Heart right ventricle (tissue), 16 donors: ENCODE measurements at regions of chr1 and their contacts with region 1.

Region 1: GRCh38 chr1:86499987-86500593 is 31.4 kb downstream of the CLCA1 start:
- DNase-seq: no peak
- ATAC-seq: no peak
- H3K4me3 ChIP-seq: no peak overlapping the region
- H3K27ac ChIP-seq: peak overlapping the region in 5 of 10 donors; percentile 37 to 94 (median 93)
- H3K4me1 ChIP-seq: peaks cover 0 to 52% (median 25%) of the 10 kb centered on the region in 9 donors
- H3K27me3 ChIP-seq: no peaks in the 10 kb centered on the region
- CTCF ChIP-seq: peak; percentile 66 to 98 (median 87)

Region 2: DNA sequence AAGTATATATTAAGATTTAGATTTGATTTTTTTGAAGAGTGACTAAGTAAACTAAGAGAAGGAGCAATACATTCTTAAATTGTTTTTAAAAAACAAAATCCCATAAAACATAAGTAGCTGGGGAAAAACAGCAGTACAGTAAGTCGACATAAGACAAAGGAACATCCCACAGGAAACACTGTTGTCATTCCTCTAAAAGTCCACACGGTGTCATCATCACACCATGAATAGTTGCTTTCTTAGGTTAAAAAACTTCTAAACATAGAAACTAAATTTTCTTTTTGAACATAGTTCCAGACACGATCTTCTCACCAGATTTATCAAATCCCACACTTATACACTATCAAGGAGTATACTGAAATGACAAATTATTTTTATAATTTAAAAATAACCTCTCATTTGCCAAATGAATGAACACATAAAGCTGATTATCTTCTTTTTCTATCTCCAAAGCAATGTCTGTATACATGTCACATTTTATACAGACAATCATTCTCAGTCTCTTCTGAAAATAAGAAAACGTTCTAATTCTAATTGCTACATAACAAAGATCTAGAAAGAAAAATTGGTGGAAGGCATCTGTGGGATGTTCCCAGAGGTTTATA is 119.7 kb before region 1 on chr1:
- intact Hi-C with region 1: loop called in 8 of 10 experiments (anchors 2 to 10 kb)
- DNase-seq: no peak
- ATAC-seq: peak in 5 of 8 donors; percentile 58 to 77 (median 65)
- H3K4me3 ChIP-seq: peak overlapping the region in 4 of 10 donors; percentile 10 to 43 (median 22)
- H3K27ac ChIP-seq: peak overlapping the region in 1 of 10 donors; percentile 31
- H3K4me1 ChIP-seq: peaks cover 0 to 23% (median 0%) of the 10 kb centered on the region in 9 donors
- H3K27me3 ChIP-seq: no peaks in the 10 kb centered on the region
- CTCF ChIP-seq: peak; percentile 39 to 94 (median 82)

Region 3: DNA sequence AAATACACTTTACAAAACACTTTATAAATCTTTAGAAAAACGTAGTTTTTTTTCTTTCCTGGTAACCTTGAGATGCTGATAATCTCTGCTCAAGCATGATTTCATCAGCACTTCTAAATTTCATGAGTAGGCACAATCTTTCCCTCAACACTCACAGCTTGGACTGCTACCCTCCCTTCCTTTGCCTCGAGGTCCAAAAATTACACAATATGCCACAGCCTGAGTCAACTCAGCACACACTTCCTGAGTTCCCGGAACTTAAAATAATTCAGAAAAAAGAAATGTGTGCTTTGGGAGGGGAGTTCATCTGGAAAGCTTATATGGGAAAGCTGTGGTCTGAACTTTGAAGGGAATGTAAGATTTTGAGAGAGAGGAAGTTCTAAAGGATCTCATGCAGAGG is 70.3 kb before region 1 on chr1:
- intact Hi-C with region 1: loop called in 1 of 10 experiments (anchors 10 kb)
- DNase-seq: peak in 1 of 2 donors; percentile 55
- ATAC-seq: peak; percentile 91 to 99 (median 97)
- H3K4me3 ChIP-seq: no peak overlapping the region
- H3K27ac ChIP-seq: peak overlapping the region in 8 of 10 donors; percentile 44 to 86 (median 76)
- H3K4me1 ChIP-seq: peaks cover 0 to 26% (median 13%) of the 10 kb centered on the region in 9 donors
- H3K27me3 ChIP-seq: no peaks in the 10 kb centered on the region
- CTCF ChIP-seq: no peak

Region 4: DNA sequence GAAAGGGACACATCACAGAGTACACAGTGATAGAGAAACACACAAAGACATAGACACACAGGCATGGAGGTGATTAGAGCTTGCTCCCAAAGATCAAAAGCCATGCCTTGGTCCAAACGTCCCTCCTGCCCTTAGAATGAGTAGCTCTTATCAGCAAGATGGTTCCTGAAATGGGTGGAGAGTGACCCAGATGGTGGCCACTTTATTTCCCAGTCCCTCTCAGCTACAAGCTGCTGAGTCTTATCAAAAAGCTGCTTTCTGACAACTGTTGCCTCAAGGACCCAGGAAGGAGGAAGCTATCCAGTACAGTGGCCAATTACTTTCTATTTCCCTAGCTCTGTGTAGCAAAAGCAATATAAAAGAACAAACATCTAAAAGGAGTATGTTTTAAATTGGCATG is 39.1 kb before region 1 on chr1:
- intact Hi-C with region 1: no loop called
- DNase-seq: no peak
- ATAC-seq: no peak
- H3K4me3 ChIP-seq: no peak overlapping the region
- H3K27ac ChIP-seq: no peak overlapping the region
- H3K4me1 ChIP-seq: peaks cover 0 to 5% (median 0%) of the 10 kb centered on the region in 9 donors
- H3K27me3 ChIP-seq: peaks cover 0 to 4% (median 0%) of the 10 kb centered on the region in 7 donors
- CTCF ChIP-seq: no peak

Region 5: DNA sequence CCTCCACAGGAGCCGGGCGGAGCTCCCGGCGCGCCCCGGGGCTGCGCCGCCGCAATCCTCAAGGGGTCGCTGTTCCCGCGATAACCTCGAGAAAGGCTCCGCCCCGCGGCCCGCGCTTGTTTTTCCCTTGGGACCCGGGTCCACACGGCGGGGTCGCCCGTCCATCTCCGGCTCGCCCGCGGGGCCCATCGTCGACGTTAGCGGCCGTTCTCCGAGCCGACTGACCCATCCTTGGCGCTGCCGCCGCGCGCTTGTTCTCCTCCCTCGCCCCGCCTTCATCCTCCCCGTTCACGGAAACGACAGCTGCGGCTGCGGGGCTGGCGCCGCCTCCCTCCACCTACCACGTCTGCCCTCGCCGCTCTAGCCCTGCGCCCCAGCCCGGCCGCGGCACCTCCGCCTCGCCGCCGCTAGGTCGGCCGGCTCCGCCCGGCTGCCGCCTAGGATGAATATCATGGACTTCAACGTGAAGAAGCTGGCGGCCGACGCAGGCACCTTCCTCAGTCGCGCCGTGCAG is 204.4 kb after region 1 on chr1 and contains the start of gene SH3GLB1:
- intact Hi-C with region 1: loop called in 4 of 10 experiments (anchors 2 to 10 kb)
- DNase-seq: peak; percentile 88 to 92
- ATAC-seq: peak; percentile 92 to 97 (median 93)
- H3K4me3 ChIP-seq: peak within 1 kb of the TSS; percentile 72 to 98 (median 88)
- H3K27ac ChIP-seq: peak within 1 kb of the TSS; percentile 94 to 100 (median 99)
- H3K4me1 ChIP-seq: peaks cover 4 to 50% (median 47%) of the 10 kb centered on the region in 9 donors
- H3K27me3 ChIP-seq: no peaks in the 10 kb centered on the region
- CTCF ChIP-seq: peak; percentile 92 to 99 (median 96)
- total RNA-seq, gene SH3GLB1: 101 to 160 (median 126) TPM

Region 6: DNA sequence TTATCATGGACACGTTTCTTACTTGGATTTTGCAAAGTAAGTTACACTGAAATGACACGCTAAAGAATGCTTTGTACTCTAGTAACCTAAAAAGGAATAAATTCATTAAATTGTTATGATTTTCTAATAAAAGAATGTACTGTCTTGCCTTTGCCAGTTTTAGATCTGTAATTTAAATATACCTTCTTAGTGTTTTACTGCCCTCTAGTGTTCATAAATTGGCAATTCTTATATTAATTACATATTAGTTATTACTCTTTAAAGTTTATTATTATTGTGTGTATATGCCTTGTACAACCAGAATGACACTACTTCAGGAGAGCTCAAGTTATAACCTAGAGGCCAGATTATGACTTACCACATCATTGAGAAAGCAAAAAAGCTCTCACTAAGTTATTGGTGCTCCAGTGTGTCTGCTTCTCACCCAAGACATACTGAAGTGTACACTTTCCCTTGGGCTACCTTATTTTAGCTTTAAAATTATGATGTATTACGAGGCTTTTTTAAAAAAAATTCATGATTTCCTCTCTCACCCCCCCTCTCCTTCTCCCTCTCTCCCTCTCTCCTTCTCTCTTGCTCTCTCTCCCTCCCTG is 584.2 kb after region 1 on chr1:
- intact Hi-C with region 1: loop called in 1 of 10 experiments (anchors 10 kb)
- DNase-seq: no peak
- ATAC-seq: peak in 3 of 8 donors; percentile 24 to 40 (median 29)
- H3K4me3 ChIP-seq: no peak overlapping the region
- H3K27ac ChIP-seq: no peak overlapping the region
- H3K4me1 ChIP-seq: peaks cover 0 to 11% (median 0%) of the 10 kb centered on the region in 9 donors
- H3K27me3 ChIP-seq: no peaks in the 10 kb centered on the region
- CTCF ChIP-seq: peak; percentile 50 to 81 (median 72)